IMR-90 (cell line): ENCODE measurements at regions of chr4 and their contacts with region 1.

Region 1: DNA sequence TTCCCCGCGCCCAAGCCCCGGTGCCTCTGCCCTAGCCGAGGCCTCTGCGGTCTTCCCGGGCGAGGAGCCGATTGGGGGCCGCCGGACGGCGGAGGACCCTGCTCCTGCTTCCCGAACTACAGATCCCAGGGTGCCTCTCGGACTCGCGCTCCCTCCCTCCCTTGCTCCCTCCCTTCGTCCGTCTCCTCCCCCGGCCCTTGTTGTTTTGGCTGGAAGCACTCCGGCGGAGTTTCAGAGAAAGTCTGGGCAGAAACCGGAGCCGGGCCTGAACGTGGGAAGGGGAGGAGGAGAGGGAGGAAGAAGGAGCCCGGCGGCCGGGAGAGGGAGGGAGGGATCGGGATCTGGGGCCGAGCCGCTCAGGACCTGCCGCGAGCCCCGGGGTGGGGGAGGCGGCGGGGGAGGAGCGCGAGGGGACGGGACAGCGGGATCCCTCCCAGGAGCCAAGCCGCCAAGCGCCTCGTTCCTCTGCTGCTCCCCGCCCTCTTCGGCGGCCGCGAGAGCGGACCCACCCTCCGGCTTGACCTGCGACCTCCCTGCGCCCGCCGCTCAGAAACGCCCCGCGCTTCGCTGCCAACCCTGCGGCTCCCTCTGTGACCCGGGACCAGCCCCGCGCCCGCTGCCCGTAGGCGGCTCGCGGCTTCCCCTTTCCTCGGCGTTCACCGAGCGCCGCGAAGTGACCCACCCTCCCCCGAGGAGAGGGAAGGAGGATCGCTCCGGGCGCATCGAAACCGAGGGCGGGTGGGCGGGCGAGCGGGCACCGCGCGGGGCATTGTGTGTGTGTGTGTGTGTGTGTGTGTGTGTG is 496 bp upstream of the GAB1 start:
- DNase-seq: peak; percentile 90
- ATAC-seq: peak; percentile 86
- H3K4me3 ChIP-seq: peak overlapping the region; percentile 94
- H3K27ac ChIP-seq: peak overlapping the region; percentile 93
- H3K4me1 ChIP-seq: peaks cover under 1% of the 10 kb centered on the region; the same call in 1 of the 2 replicates
- H3K27me3 ChIP-seq: no peaks in the 10 kb centered on the region
- CTCF ChIP-seq: no peak
- POLR2A ChIP-seq: peak; percentile 54
- RAD21 ChIP-seq: no peak

Region 2: GRCh38 chr4:142817442-142817841 is 518.7 kb before region 1 on chr4:
- CTCF ChIA-PET with region 1: no interaction called
- POLR2A ChIA-PET with region 1: no interaction called
- dilution Hi-C with region 1: no loop called
- in situ Hi-C with region 1: no loop called
- intact Hi-C with region 1: no loop called
- DNase-seq: peak; percentile 88
- ATAC-seq: peak; percentile 89
- H3K4me3 ChIP-seq: no peak overlapping the region
- H3K27ac ChIP-seq: peak overlapping the region; percentile 74; the same call in 1 of the 2 replicates
- H3K4me1 ChIP-seq: peaks cover 4% of the 10 kb centered on the region; the same call in 1 of the 2 replicates
- H3K27me3 ChIP-seq: no peaks in the 10 kb centered on the region
- CTCF ChIP-seq: no peak
- POLR2A ChIP-seq: no peak
- RAD21 ChIP-seq: no peak

Region 3: DNA sequence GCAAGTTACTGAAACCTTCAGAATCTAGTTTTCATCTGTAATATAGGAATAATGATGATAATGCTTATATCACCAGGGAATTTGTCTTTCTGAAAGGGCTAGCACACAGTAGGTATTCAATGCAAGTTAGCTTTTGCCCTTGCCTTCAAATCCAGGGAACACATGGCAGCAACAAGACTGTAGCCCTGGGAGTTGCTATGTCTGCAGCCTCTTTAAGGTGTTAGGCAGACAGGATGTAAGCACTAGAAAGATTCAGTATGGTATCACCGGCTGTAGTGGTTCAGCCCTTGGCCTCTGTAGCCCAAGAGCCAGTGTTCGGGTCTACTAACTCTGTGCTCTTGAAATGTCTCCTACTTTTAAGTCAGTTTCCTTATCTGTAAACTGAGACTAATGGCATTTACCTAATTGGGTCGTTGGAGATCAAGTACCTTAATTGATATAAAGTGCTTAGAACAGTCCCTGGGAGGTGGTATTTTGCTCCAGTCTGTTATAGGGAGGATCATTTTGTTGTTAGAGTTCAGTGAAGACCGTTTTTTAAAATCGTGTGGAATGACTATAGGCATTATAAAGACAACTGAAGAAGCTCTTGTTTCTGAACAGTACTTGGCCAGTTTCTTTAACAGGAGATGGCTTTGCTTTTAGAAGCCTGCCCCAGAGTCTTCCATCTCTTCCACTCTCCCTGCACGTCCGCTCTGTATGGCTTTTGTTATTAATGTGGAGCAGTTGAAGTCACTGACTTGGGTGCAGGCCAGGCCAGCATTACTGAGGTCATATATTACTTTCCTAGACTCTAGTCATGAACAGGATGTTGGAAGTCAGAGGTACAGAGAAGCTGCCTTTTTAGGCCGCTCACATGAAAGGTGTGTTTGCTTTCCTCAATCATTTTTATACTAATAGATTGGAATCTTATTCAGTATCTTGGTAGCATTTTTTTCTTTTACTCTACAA is 45.3 kb after region 1 on chr4:
- CTCF ChIA-PET with region 1: no interaction called
- POLR2A ChIA-PET with region 1: no interaction called
- dilution Hi-C with region 1: no loop called
- in situ Hi-C with region 1: no loop called
- intact Hi-C with region 1: loop called (anchors 5 kb)
- DNase-seq: peak; percentile 93
- ATAC-seq: peak; percentile 82
- H3K4me3 ChIP-seq: no peak overlapping the region
- H3K27ac ChIP-seq: peak overlapping the region; percentile 84
- H3K4me1 ChIP-seq: peaks cover 15% of the 10 kb centered on the region
- H3K27me3 ChIP-seq: no peaks in the 10 kb centered on the region
- CTCF ChIP-seq: no peak
- POLR2A ChIP-seq: peak; percentile 47; the same call in 1 of the 2 replicates
- RAD21 ChIP-seq: no peak

Region 4: GRCh38 chr4:143391895-143392294 is 55.7 kb after region 1 on chr4:
- CTCF ChIA-PET with region 1: no interaction called
- POLR2A ChIA-PET with region 1: no interaction called
- dilution Hi-C with region 1: no loop called
- in situ Hi-C with region 1: no loop called
- intact Hi-C with region 1: loop called (anchors 2 kb)
- DNase-seq: peak; percentile 89
- ATAC-seq: peak; percentile 65
- H3K4me3 ChIP-seq: no peak overlapping the region
- H3K27ac ChIP-seq: peak overlapping the region; percentile 28; the same call in 1 of the 2 replicates
- H3K4me1 ChIP-seq: peaks cover 25% of the 10 kb centered on the region
- H3K27me3 ChIP-seq: no peaks in the 10 kb centered on the region
- CTCF ChIP-seq: no peak
- POLR2A ChIP-seq: no peak
- RAD21 ChIP-seq: no peak